Panc1 (cell line): ENCODE measurements at regions of chr14 and their contacts with region 1.

Region 1: GRCh38 chr14:79530555-79530954 is 680.7 kb downstream of the DIO2 start:
- DNase-seq: no peak
- ATAC-seq: no peak
- H3K4me3 ChIP-seq: no peak overlapping the region
- H3K27ac ChIP-seq: no peak overlapping the region
- H3K4me1 ChIP-seq: no peaks in the 10 kb centered on the region
- H3K27me3 ChIP-seq: no peaks in the 10 kb centered on the region
- CTCF ChIP-seq: no peak

Region 2: GRCh38 chr14:79449004-79449403 is 81.6 kb before region 1 on chr14:
- CTCF ChIA-PET with region 1: no interaction called
- POLR2A ChIA-PET with region 1: interaction called, 11 read pairs
- in situ Hi-C with region 1: no loop called
- intact Hi-C with region 1: no loop called
- DNase-seq: no peak
- ATAC-seq: no peak
- H3K4me3 ChIP-seq: no peak overlapping the region
- H3K27ac ChIP-seq: no peak overlapping the region
- H3K4me1 ChIP-seq: no peaks in the 10 kb centered on the region
- H3K27me3 ChIP-seq: no peaks in the 10 kb centered on the region
- CTCF ChIP-seq: no peak

Region 3: GRCh38 chr14:79584679-79585078 is 54.1 kb after region 1 on chr14:
- CTCF ChIA-PET with region 1: no interaction called
- POLR2A ChIA-PET with region 1: no interaction called
- in situ Hi-C with region 1: no loop called
- intact Hi-C with region 1: no loop called
- DNase-seq: no peak
- ATAC-seq: no peak
- H3K4me3 ChIP-seq: no peak overlapping the region
- H3K27ac ChIP-seq: no peak overlapping the region
- H3K4me1 ChIP-seq: no peaks in the 10 kb centered on the region
- H3K27me3 ChIP-seq: no peaks in the 10 kb centered on the region
- CTCF ChIP-seq: no peak